Posterior vena cava (tissue), 2 donors: ENCODE measurements at regions of chr3 and their contacts with region 1.

Region 1: GRCh38 chr3:74988095-74988494 is 373.6 kb upstream of the CNTN3 start:
- DNase-seq: no peak

Region 2: DNA sequence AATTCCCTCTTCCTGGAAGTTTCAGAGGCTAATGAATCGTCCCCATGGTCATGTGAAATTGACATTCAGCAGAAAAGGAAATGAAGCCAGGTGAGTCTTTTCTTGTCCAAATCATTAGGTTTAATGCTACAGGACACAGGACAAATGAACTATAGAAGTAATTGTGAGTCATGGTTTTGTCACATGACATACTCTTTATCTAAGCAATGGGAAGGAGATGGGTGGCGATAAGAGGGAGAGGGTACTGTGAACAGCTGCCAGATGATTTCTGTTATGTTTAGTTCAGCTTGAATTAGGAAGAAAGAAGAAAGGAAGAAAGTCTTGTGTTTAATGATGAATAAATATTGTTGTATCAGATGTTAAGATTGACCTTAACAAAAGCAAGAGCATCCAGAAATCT is 1312.7 kb after region 1 on chr3:
- intact Hi-C with region 1: loop called in 1 of 2 experiments (anchors 5 kb)
- DNase-seq: no peak